AG04450 (cell line): ENCODE measurements at regions of chr9 and their contacts with region 1.

Region 1: DNA sequence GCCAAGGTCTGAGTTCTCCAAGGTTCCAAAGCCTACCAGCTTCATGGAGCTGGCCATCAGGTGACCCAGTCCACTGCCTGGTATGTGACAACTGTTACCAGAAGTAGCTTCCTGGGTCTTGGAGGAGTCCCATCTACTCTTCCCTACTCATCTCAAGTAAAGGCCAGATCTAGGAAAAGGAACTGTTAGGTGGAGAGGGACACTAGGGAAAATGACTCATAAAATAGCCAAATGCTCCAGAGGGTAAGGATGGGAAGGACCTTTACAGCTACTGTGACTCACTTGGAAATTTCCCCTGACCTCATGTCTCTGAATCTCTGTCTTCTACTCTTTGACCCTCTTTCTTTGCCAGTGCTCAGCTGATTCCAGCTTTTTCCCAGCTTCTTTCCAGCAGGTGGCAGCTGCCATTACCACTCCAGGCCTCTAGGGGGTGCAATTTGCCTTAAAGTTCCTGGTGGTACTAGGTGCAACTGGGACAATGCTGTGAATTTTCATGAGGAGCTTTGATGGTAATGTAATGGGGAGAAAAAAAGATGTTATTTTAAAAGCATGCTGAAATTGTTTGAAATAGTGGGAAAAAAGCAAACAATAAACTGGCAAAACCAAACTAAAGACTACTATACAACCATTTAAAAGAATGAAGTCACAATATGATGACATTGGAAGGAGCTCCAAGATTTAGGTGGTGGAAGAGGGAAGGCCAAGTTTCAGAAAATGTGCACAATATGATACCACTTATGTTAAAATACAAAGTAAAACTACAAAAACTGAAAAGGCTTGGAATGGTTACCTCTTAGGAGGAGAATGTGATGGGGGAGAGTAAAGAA is 27.1 kb upstream of the MYORG start:
- DNase-seq: peak; percentile 24
- H3K4me3 ChIP-seq: no peak overlapping the region
- H3K27ac ChIP-seq: no peak overlapping the region
- H3K27me3 ChIP-seq: no peaks in the 10 kb centered on the region
- CTCF ChIP-seq: peak; percentile 99

Region 2: DNA sequence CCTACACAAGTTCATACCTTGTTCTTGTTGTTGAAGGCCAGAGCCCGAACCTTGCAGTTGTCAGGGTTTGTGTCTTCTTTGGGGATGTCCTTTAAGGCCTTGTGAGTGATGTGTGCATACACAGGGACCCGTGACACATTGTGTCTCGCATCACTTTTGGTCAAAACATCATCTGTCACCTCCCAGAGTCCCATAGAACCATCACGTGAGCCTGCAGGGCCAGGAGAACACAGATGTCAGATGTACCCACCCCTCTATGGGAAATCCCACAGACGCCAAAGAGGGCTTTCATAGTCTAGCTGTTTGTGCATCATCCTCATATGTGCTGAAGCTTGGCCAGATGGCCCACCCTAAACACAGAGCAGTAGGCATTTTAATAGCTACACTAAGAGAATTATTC is 305.5 kb before region 1 on chr9:
- CTCF ChIA-PET with region 1: no interaction called
- POLR2A ChIA-PET with region 1: no interaction called
- DNase-seq: no peak
- H3K4me3 ChIP-seq: no peak overlapping the region
- H3K27ac ChIP-seq: no peak overlapping the region
- H3K27me3 ChIP-seq: no peaks in the 10 kb centered on the region
- CTCF ChIP-seq: no peak

Region 3: GRCh38 chr9:34332076-34332964 is 71.4 kb before region 1 on chr9:
- CTCF ChIA-PET with region 1: interaction called, 43 read pairs
- POLR2A ChIA-PET with region 1: no interaction called
- DNase-seq: no peak
- H3K4me3 ChIP-seq: no peak overlapping the region
- H3K27ac ChIP-seq: no peak overlapping the region
- H3K27me3 ChIP-seq: no peaks in the 10 kb centered on the region
- CTCF ChIP-seq: peak; percentile 58

Region 4: DNA sequence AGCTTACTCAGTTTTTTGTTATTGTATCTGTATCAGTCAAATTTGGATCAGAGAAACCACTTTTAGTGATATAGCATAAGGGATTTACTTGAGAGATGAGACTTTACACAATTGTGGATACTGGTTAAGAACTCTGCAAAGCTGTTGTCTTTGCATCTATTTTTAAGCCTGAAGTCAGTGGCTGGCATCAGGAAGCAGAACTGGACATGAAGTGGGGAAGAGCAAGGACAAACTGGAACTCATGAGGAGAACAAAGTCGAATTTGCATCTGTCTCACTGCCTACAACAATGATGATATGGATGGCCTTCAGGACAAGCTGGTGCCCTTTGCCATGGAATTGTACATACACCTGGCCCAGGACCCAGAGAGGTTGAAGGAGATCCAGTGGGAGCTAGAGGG is 11.3 kb before region 1 on chr9:
- CTCF ChIA-PET with region 1: interaction called, 35 read pairs
- POLR2A ChIA-PET with region 1: no interaction called
- DNase-seq: no peak
- H3K4me3 ChIP-seq: no peak overlapping the region
- H3K27ac ChIP-seq: no peak overlapping the region
- H3K27me3 ChIP-seq: peaks cover 2% of the 10 kb centered on the region
- CTCF ChIP-seq: no peak

Region 5: GRCh38 chr9:34437006-34437925 is 33.5 kb after region 1 on chr9:
- CTCF ChIA-PET with region 1: interaction called, 44 read pairs
- POLR2A ChIA-PET with region 1: no interaction called
- DNase-seq: no peak
- H3K4me3 ChIP-seq: no peak overlapping the region
- H3K27ac ChIP-seq: no peak overlapping the region
- H3K27me3 ChIP-seq: no peaks in the 10 kb centered on the region
- CTCF ChIP-seq: peak; percentile 87

Region 6: DNA sequence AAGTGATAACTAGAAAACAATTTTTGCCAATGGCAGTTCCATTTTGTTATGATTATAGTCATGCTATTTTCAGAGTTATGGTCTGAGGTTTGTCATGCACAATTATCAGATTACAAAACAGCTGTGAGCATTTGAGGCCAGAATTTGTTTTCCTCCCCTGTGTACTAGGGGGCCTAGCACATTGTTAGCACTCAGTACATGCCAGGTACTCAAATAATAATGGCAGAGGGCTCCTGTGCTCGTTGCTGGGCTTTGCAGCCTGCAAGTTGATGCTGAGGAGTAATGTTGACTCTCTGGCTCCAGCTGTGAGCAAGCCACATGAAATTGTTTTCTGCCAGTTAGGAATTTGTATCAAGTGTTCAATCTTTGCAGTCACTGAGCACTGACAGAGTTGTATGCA is 61.7 kb after region 1 on chr9:
- CTCF ChIA-PET with region 1: interaction called, 11 read pairs
- POLR2A ChIA-PET with region 1: no interaction called
- DNase-seq: no peak
- H3K4me3 ChIP-seq: no peak overlapping the region
- H3K27ac ChIP-seq: no peak overlapping the region
- H3K27me3 ChIP-seq: peaks cover 18% of the 10 kb centered on the region
- CTCF ChIP-seq: no peak

Region 7: GRCh38 chr9:34546834-34547827 is 143.4 kb after region 1 on chr9:
- CTCF ChIA-PET with region 1: interaction called, 17 read pairs
- POLR2A ChIA-PET with region 1: no interaction called
- DNase-seq: peak; percentile 10
- H3K4me3 ChIP-seq: no peak overlapping the region
- H3K27ac ChIP-seq: no peak overlapping the region
- H3K27me3 ChIP-seq: peaks cover 10% of the 10 kb centered on the region
- CTCF ChIP-seq: peak; percentile 63